GM12878 (cell line): ENCODE measurements at regions of chr4 and their contacts with region 1.

Region 1: GRCh38 chr4:122930862-122931261 is 8.5 kb upstream of the NUDT6 start:
- DNase-seq: no peak
- ATAC-seq: no peak
- H3K4me3 ChIP-seq: no peak overlapping the region
- H3K27ac ChIP-seq: no peak overlapping the region
- H3K4me1 ChIP-seq: no peaks in the 10 kb centered on the region
- H3K27me3 ChIP-seq: no peaks in the 10 kb centered on the region
- CTCF ChIP-seq: peak in 2 of 3 experiments; percentile 21 to 46; a peak in 3 of 6 replicates
- EP300 ChIP-seq: no peak
- POLR2A ChIP-seq: no peak
- RAD21 ChIP-seq: peak; percentile 20; the same call in 1 of the 2 replicates

Region 2: GRCh38 chr4:122758033-122758432 is 172.8 kb before region 1 on chr4:
- CTCF ChIA-PET with region 1: interaction called, 37 read pairs
- POLR2A ChIA-PET with region 1: no interaction called
- RAD21 ChIA-PET with region 1: interaction called, 10 read pairs
- SMC1A ChIA-PET with region 1: interaction called, 35 read pairs
- in situ Hi-C with region 1: no loop called
- intact Hi-C with region 1: loop called (anchors 1 kb)
- DNase-seq: no peak
- ATAC-seq: peak; percentile 56
- H3K4me3 ChIP-seq: no peak overlapping the region
- H3K27ac ChIP-seq: no peak overlapping the region
- H3K4me1 ChIP-seq: peaks cover 6% of the 10 kb centered on the region; the same call in 1 of the 2 replicates
- H3K27me3 ChIP-seq: no peaks in the 10 kb centered on the region
- CTCF ChIP-seq: peak; percentile 43 to 60 (median 55); a peak in 5 of 6 replicates
- EP300 ChIP-seq: no peak
- POLR2A ChIP-seq: no peak
- RAD21 ChIP-seq: peak; percentile 76